ENCODE measurements at regions of chr7 and their contacts with region 1.

Region 1: GRCh38 chr7:39686261-39686924 is 63.0 kb downstream of the RALA start:
- DNase-seq: no peak
- H3K4me3 Mint-ChIP-seq: no peak overlapping the region
- H3K27ac Mint-ChIP-seq: no peak overlapping the region
- H3K4me1 Mint-ChIP-seq: peaks cover 19% of the 10 kb centered on the region
- H3K27me3 Mint-ChIP-seq: no peaks in the 10 kb centered on the region

Region 2: GRCh38 chr7:39184380-39184779 is 502.0 kb before region 1 on chr7:
- intact Hi-C with region 1: no loop called
- DNase-seq: no peak
- H3K4me3 Mint-ChIP-seq: no peak overlapping the region
- H3K27ac Mint-ChIP-seq: no peak overlapping the region
- H3K4me1 Mint-ChIP-seq: no peaks in the 10 kb centered on the region
- H3K27me3 Mint-ChIP-seq: peaks cover 2% of the 10 kb centered on the region

Region 3: DNA sequence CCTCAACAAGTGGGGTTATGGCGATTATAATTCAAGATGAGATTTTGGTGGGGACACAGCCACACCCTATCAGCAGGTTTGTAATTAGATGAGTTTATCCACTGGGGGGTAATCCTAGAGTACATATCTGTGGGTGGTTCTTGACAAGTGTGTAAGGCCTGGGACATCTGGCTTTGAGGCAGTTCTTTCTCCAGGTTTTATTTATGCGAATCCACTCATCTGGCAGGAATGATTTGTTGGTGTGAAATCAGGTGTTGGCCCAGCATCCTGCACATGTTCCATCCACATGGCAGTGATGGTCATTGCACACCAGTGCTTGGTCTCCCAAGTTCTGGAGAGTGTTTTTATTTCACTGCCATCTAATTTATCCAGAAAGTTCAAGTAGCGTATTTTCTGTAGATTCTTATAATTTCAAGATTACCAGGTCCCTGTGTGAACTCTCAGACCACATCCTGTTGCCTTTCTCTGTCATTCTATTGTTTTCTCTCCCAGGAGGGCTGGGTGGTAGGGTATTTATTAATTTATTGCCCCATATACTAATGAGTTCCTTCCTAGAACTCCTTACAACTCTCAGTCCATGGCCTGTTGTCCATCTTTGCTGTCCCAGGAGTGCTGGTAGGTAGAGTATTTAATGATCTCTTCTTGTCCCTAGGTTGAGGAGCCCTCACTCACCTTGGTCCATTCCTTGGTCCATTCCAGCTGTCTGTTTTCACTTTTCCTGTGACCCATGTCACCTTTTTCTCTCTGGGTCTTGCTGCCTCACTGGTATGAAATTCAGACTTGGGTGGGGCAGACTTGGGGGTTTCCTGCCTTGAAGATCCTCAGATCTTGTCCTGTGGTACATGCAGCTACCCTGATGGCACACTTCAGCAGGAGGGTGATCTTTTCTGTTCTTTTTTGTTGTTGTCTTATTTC is 52.6 kb before region 1 on chr7:
- intact Hi-C with region 1: loop called (anchors 10 kb)
- DNase-seq: no peak
- H3K4me3 Mint-ChIP-seq: peak overlapping the region; percentile 23
- H3K27ac Mint-ChIP-seq: peak overlapping the region; percentile 49
- H3K4me1 Mint-ChIP-seq: peaks cover 64% of the 10 kb centered on the region
- H3K27me3 Mint-ChIP-seq: no peaks in the 10 kb centered on the region

Region 4: DNA sequence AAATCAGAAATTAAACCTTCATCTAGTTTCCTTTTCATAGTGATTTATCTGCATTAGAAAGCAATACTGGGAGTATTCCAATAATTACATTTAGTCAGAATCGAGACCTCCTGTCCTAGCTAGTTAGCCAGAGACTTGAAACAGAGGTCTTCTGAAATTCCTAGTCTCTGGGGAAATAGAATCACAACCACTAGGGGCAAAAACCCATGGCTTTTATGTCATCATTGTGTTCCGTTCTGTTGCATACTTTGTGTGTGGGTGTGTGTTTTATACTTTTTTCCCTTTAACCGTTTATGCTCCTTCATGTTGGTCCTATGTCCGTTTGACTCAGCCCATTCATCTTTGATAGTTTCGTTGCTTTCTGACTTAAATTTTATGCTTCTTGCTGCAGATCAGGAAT is 16.8 kb after region 1 on chr7:
- intact Hi-C with region 1: no loop called
- DNase-seq: no peak
- H3K4me3 Mint-ChIP-seq: no peak overlapping the region
- H3K27ac Mint-ChIP-seq: no peak overlapping the region
- H3K4me1 Mint-ChIP-seq: peaks cover 5% of the 10 kb centered on the region
- H3K27me3 Mint-ChIP-seq: no peaks in the 10 kb centered on the region

Region 5: DNA sequence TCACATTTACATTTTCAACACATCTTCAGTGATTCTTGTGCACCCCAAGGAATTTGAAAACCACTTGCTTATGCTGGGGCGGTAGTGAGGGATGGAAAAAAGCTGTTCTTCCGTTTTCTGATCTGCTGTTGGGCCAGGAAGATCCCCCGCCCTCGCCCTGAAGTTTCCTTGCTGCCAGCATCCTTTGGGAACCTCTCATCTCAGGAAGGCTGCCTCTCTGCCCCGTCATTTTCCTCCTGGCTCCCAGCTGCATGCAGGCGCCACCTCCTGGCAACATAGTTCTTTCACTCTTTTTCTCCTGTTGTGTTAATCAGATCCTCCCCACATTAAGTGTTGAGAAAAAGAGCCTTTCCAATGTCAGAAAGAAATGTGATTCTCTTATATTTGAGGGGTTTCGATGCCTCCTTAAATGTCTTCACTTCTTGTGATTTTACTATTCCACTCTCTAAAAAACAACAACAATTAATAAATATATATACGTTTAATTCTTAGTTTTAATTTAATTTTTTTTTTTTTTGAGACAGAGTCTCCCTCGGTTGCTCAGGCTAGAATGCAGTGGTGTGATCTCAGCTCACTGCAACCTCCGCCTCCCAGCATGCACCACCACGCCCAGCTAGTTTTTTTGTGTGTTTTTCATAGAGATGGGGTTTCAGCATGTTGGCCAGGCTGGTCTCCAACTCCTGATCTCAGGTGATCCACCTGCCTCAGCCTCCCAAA is 59.9 kb after region 1 on chr7:
- intact Hi-C with region 1: no loop called
- DNase-seq: peak; percentile 26
- H3K4me3 Mint-ChIP-seq: no peak overlapping the region
- H3K27ac Mint-ChIP-seq: peak overlapping the region; percentile 69
- H3K4me1 Mint-ChIP-seq: peaks cover 20% of the 10 kb centered on the region
- H3K27me3 Mint-ChIP-seq: no peaks in the 10 kb centered on the region

Measured in activated T-helper 1 cell treated with anti-CD3 and anti-CD28 coated beads, Interleukin-12 subunit alpha, Interleukin-12 subunit beta, Interleukin-2, Interleukin-4 antibody, amounts not matched to agents 30 ng/mL and 10 ng/mL and 1 ng/mL, durations not matched to agents 14 hours and 24 hours and 36 hours (primary cell).